ENCODE measurements at regions of chr15 and their contacts with region 1.

Region 1: DNA sequence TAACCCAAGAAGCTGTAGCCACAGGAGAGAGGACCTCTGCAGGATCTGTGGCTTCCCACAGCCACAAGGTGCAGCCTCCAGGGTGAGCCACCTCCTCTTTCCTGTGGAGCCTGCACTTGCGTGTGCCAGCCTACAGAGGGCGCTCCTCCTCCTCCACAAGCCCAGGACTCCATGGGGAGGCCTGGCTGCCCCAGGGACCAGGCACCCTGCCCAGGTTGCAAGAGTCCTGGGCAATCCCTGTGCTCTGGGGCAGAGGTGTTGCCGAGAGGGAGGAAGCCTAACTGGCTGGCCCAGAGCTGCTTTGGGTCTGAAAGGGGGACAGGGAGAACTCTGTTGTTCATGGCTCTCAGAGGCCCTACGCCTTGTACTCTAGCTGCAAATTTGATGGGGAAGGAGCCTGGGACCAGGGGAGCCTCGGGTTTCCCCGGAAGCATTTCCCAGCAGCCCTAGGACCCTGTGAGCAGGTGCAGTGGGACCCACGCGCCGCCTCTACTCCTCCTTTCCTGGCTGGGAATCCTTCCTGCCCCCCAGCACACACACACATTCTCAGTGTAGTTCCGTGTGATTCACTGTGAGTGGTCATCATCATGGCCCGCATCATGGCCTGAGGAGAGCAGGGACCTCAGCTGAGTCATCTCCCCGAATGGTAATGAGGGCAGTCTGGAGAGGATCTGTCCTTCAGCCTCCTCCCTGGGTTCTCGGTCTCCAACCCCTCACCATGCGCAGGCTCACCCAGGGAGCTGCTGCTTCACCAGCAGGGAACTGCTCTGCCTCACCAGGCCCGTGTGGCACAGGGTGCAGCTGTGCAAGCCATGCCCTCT is 24.3 kb downstream of the TBC1D21 start:
- DNase-seq: peak; percentile 58 to 61
- H3K4me3 ChIP-seq: no peak overlapping the region
- H3K27ac ChIP-seq: peak overlapping the region; percentile 62
- H3K4me1 ChIP-seq: peaks cover 18% of the 10 kb centered on the region
- H3K27me3 ChIP-seq: no peaks in the 10 kb centered on the region
- CTCF ChIP-seq: peak; percentile 98

Region 2: DNA sequence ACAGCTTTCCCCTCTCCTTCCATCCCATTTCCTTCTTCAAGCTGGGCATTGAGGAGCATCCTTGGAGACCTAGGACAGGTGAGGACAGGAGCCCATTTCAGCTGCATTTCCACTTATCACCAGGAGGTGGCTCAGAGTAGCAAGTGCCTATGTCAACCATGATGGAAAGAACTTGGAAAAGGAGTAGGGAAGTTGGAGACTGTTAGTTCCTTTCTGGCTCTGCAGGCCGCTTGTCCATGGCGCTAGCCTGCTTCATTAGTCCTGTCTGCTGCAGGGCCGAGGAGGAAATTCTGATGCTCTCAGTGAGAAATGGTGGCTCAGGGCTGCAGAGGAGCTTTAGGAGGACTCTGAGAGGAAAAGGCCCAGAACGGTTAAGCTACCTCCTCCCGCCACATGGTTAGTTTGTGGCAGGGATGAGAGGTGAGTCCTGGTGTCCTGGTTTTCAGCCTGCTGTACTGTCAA is 220.5 kb before region 1 on chr15:
- CTCF ChIA-PET with region 1: no interaction called
- POLR2A ChIA-PET with region 1: no interaction called
- intact Hi-C with region 1: no loop called
- DNase-seq: peak; percentile 46 to 50
- H3K4me3 ChIP-seq: no peak overlapping the region
- H3K27ac ChIP-seq: no peak overlapping the region
- H3K4me1 ChIP-seq: no peaks in the 10 kb centered on the region
- H3K27me3 ChIP-seq: no peaks in the 10 kb centered on the region
- CTCF ChIP-seq: peak; percentile 87

Region 3: GRCh38 chr15:73915079-73915478 is 17.4 kb after region 1 on chr15:
- CTCF ChIA-PET with region 1: interaction called, 3 read pairs
- POLR2A ChIA-PET with region 1: interaction called, 10 read pairs
- intact Hi-C with region 1: no loop called
- DNase-seq: peak in 1 of 2 experiments; percentile 96
- H3K4me3 ChIP-seq: no peak overlapping the region
- H3K27ac ChIP-seq: peak overlapping the region; percentile 36; the same call in 1 of the 2 replicates
- H3K4me1 ChIP-seq: peaks cover 24% of the 10 kb centered on the region
- H3K27me3 ChIP-seq: no peaks in the 10 kb centered on the region
- CTCF ChIP-seq: no peak